CD4-positive, alpha-beta T cell (primary cell): ENCODE measurements at regions of chr2 and their contacts with region 1.

Region 1: GRCh38 chr2:197399887-197400540 is 34.8 kb downstream of the SF3B1 start:
- DNase-seq: no peak
- ATAC-seq: no peak
- H3K4me3 ChIP-seq: no peak overlapping the region
- H3K4me3 Mint-ChIP-seq: no peak overlapping the region
- H3K27ac ChIP-seq: no peak overlapping the region
- H3K27ac Mint-ChIP-seq: no peak overlapping the region
- H3K4me1 ChIP-seq: no peaks in the 10 kb centered on the region
- H3K4me1 Mint-ChIP-seq: no peaks in the 10 kb centered on the region
- H3K27me3 ChIP-seq: no peaks in the 10 kb centered on the region
- H3K27me3 Mint-ChIP-seq: no peaks in the 10 kb centered on the region
- CTCF ChIP-seq: no peak

Region 2: DNA sequence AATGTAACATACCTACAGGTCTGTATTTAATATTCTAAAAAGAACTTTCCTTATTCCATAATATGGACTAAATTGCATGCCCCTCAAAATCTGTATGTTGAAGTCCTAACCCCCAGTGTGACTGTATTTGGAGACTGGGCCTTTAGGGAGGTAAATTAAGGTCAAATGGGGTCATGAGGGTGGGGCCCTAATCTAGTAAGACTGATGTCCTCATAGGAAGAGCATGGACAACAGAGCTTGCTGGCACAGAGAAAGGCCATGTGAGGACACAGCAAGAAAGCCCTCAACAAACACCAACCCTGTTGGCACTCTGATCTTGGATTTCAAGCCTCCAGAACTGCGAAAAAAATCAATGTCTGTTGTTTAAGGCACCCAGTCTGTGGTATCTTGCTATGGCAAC is 16.3 kb after region 1 on chr2:
- CTCF ChIA-PET with region 1: no interaction called
- POLR2A ChIA-PET with region 1: no interaction called
- intact Hi-C with region 1: loop called in 1 of 2 experiments (anchors 2 kb)
- DNase-seq: no peak
- ATAC-seq: no peak
- H3K4me3 ChIP-seq: no peak overlapping the region
- H3K4me3 Mint-ChIP-seq: no peak overlapping the region
- H3K27ac ChIP-seq: no peak overlapping the region
- H3K27ac Mint-ChIP-seq: no peak overlapping the region
- H3K4me1 ChIP-seq: no peaks in the 10 kb centered on the region
- H3K4me1 Mint-ChIP-seq: peaks cover 17% of the 10 kb centered on the region
- H3K27me3 ChIP-seq: no peaks in the 10 kb centered on the region
- H3K27me3 Mint-ChIP-seq: no peaks in the 10 kb centered on the region
- CTCF ChIP-seq: no peak

Region 3: DNA sequence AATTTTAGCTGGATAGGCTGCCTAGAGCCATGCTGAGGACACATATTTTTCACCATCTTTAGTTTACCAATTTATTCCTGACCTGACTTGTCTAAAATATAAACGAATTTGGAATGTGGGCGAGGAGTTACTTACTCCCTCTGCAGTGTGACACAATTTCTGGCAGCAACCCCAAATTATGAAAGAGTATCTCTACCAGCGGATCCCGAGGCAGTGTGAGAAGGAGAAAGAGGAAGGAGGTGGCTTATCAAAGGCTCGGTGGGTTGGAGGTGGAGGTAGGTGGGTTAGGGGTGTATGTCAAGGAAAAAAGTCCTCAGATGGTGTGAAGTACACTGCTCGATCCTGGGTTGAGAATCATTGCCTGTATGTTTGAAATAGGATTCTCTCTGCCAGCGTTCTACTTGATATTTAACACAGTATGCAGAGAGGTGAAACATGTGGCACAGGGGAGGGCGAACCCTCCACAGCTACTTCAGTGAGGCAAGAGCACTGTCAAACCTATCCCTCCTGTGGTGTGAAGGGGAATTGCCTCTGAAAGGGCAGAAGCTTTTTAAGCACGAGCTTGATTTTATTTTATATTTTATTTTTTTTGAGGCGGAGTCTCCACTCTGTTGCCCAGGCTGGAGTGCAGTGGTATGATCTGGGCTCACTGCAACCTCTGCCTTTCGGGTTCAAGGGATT is 199.4 kb after region 1 on chr2:
- CTCF ChIA-PET with region 1: no interaction called
- POLR2A ChIA-PET with region 1: no interaction called
- intact Hi-C with region 1: no loop called
- DNase-seq: peak in 10 of 14 experiments; percentile 2 to 65 (median 27)
- ATAC-seq: peak; percentile 97
- H3K4me3 ChIP-seq: no peak overlapping the region
- H3K4me3 Mint-ChIP-seq: peak overlapping the region; percentile 18
- H3K27ac ChIP-seq: no peak overlapping the region
- H3K27ac Mint-ChIP-seq: no peak overlapping the region
- H3K4me1 ChIP-seq: peaks cover 6% of the 10 kb centered on the region
- H3K4me1 Mint-ChIP-seq: no peaks in the 10 kb centered on the region
- H3K27me3 ChIP-seq: no peaks in the 10 kb centered on the region
- H3K27me3 Mint-ChIP-seq: peaks cover 28% of the 10 kb centered on the region
- CTCF ChIP-seq: peak; percentile 35